Caco-2 (cell line): ENCODE measurements at regions of chr2 and their contacts with region 1.

Region 1: DNA sequence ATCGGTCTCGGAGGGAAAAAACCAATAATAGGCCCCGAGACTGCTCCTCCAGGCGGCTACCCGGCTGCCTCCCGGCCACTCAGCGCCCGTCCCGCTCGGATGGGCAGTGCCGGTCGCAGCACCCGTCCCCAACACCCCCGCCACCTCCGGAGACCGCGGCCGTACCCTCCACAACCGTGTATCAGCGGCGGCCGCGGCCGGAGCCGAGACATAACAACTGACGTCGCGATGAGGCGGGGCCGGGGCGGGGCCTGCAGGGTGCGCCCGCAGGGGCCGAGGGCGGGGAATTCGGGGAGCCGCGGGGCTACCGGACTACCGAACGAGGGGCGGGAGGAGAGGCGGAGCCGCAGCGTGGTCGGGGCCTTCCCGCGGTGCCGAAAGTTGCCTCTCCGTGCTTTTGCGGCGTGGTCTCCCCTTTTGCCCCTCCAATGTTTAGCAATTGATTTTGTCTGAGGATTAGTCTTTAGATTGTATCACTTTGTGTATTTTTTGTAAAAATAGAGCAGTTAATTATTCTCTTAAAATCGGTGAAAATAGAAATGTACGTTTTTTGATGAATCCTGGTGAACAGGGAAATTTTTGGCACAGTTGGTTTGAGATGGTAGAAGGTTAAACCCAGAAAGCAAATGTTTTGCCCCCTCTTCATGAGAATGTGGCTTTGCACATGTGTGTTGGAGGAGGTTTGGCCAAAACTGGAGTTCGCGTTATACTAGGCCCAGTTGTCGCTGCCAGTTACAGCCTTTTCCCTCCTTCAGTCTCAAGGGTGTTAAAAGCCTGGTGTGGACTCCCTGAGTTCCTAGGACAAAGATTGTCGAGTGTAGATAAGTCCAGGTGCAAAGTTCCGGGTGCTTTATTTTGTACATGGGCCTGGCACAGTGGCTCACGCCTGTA is at the start of gene RNF103:
- DNase-seq: peak; percentile 95 to 97
- H3K4me3 ChIP-seq: peak within 1 kb of the TSS; percentile 89
- H3K4me3 Mint-ChIP-seq: peak within 1 kb of the TSS; percentile 95
- H3K27ac Mint-ChIP-seq: peak within 1 kb of the TSS; percentile 97
- H3K4me1 ChIP-seq: peaks cover 19% of the 10 kb centered on the region
- H3K4me1 Mint-ChIP-seq: peaks cover 24% of the 10 kb centered on the region
- H3K27me3 ChIP-seq: no peaks in the 10 kb centered on the region
- H3K27me3 Mint-ChIP-seq: no peaks in the 10 kb centered on the region
- CTCF ChIP-seq: no peak
- total RNA-seq, gene RNF103: 20.0 and 21.8 TPM in 2 replicates

Region 2: GRCh38 chr2:86492048-86492453 is 131.8 kb before region 1 on chr2:
- CTCF ChIA-PET with region 1: no interaction called
- POLR2A ChIA-PET with region 1: no interaction called
- intact Hi-C with region 1: loop called (anchors 10 kb)
- DNase-seq: peak in 1 of 2 experiments; percentile 51
- H3K4me3 ChIP-seq: no peak overlapping the region
- H3K4me3 Mint-ChIP-seq: no peak overlapping the region
- H3K27ac Mint-ChIP-seq: no peak overlapping the region
- H3K4me1 ChIP-seq: peaks cover 27% of the 10 kb centered on the region
- H3K4me1 Mint-ChIP-seq: peaks cover 11% of the 10 kb centered on the region
- H3K27me3 ChIP-seq: no peaks in the 10 kb centered on the region
- H3K27me3 Mint-ChIP-seq: no peaks in the 10 kb centered on the region
- CTCF ChIP-seq: no peak

Region 3: DNA sequence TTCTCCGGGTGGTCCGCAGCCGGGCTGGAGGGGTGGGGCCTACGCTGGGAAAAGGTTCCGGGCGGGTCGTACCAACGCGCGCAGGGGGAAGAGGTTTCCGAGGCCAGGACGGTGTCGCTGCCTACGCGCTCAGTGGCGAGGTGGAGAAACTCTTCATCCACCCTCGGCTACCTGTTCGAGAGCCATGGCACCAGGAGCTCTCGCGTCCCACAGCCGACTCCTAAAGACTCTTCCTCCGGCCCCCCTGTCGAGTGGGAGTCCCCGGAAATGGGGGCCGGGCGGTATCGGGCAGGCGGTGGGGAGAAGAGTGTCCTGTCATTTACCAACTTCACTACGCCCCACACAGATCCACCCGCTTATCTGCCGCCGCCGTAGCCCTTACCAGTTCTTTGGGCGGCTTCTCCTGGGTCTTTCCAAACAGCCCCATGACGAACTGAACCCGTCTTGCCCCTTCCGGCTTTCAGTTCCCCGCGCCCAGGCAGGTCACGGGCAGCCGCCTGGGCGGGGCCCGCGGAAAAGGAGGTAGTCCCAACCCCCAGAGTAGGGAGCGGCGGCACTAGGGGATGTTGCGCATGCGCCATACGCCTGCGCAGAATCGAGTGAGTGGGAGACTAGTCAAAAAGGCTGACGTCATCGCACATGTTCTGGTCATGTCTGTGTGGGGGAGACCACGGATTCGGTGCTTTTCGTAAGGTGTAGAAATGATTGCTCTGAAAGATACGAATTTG is 60.8 kb before region 1 on chr2 and contains the start of gene CHMP3:
- CTCF ChIA-PET with region 1: no interaction called
- POLR2A ChIA-PET with region 1: no interaction called
- intact Hi-C with region 1: loop called (anchors 2 kb)
- DNase-seq: peak; percentile 98
- H3K4me3 ChIP-seq: peak within 1 kb of the TSS; percentile 81
- H3K4me3 Mint-ChIP-seq: peak within 1 kb of the TSS; percentile 97
- H3K27ac Mint-ChIP-seq: peak within 1 kb of the TSS; percentile 98
- H3K4me1 ChIP-seq: peaks cover 13% of the 10 kb centered on the region
- H3K4me1 Mint-ChIP-seq: peaks cover 16% of the 10 kb centered on the region
- H3K27me3 ChIP-seq: no peaks in the 10 kb centered on the region
- H3K27me3 Mint-ChIP-seq: no peaks in the 10 kb centered on the region
- CTCF ChIP-seq: no peak
- total RNA-seq, gene CHMP3: 93.3 and 93.5 TPM in 2 replicates

Region 4: DNA sequence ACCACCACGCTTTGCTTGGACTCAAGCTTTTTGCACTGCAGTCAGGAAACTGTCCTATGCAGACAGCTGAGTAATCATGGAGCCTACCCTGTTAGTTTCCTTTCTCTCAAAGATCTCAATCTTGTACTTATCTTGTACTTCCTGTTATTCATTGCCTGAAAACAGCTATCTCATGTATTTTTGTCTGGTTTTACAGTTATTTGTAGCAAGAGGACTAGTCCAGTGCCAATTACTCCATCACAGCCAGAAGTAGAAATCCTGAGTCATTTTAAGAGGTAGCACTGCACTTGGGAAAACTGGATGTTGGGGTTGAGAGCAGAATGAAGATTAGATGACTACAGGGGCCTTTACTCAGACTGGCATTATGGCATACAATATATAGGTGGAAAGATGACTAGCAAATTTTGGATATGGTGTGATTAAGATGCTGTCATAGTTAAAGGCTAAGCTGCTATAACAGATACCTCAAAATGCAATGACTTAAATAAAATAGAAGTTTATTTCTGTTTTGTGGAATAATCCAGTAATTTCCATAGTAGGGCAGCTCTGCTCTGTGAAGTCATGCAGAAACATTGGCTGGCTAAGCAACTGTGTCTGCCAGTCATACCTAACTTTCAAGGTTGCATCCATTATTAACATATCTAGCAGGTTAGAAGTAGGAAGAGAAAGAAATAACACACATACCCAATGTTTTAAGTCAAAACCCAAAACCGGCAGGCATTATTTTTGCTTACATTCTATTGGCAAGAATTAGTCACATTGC is 39.6 kb before region 1 on chr2:
- CTCF ChIA-PET with region 1: no interaction called
- POLR2A ChIA-PET with region 1: no interaction called
- intact Hi-C with region 1: no loop called
- DNase-seq: no peak
- H3K4me3 ChIP-seq: no peak overlapping the region
- H3K4me3 Mint-ChIP-seq: no peak overlapping the region
- H3K27ac Mint-ChIP-seq: no peak overlapping the region
- H3K4me1 ChIP-seq: no peaks in the 10 kb centered on the region
- H3K4me1 Mint-ChIP-seq: no peaks in the 10 kb centered on the region
- H3K27me3 ChIP-seq: no peaks in the 10 kb centered on the region
- H3K27me3 Mint-ChIP-seq: peaks cover 18% of the 10 kb centered on the region
- CTCF ChIP-seq: no peak

Region 5: DNA sequence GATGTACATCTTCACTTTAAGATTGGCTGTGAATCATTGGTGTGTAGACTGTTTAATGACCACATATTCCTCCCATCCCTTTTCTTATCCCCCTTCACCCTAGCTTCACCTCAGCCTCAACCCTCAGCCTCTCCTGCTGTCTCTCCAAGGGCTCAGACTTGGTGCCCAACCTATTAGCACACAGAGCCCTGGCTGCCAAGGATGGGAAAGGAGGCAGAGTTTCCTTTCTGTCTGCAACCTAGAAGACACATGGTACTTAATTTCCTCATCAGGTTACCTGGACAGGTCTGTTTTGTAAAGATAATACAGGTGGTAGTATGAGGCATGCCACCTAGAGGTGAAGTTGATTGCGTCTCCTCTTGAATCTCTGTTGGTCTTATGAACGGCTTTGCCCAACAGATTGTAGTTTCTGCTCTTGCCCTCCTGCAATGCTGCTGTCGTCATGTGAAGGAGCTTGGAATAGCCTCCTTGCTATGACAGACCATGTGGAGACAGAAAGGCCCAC is 51.7 kb after region 1 on chr2:
- CTCF ChIA-PET with region 1: no interaction called
- POLR2A ChIA-PET with region 1: interaction called, 3 read pairs
- intact Hi-C with region 1: loop called (anchors 1 kb)
- DNase-seq: peak; percentile 42 to 44
- H3K4me3 ChIP-seq: no peak overlapping the region
- H3K4me3 Mint-ChIP-seq: no peak overlapping the region
- H3K27ac Mint-ChIP-seq: no peak overlapping the region
- H3K4me1 ChIP-seq: peaks cover 19% of the 10 kb centered on the region
- H3K4me1 Mint-ChIP-seq: peaks cover 19% of the 10 kb centered on the region
- H3K27me3 ChIP-seq: no peaks in the 10 kb centered on the region
- H3K27me3 Mint-ChIP-seq: no peaks in the 10 kb centered on the region
- CTCF ChIP-seq: peak; percentile 42 to 65